Activated CD8-positive, alpha-beta T cell treated with anti-CD3 and anti-CD28 coated beads, Interleukin-2, amount 10 ng/mL, durations not matched to agents 7 days and 5 days (primary cell): ENCODE measurements at regions of chr3 and their contacts with region 1.

Region 1: GRCh38 chr3:94062431-94063404 is at the starts of genes DHFR2 and NSUN3:
- DNase-seq: peak; percentile 91
- ATAC-seq: peak; percentile 92
- H3K4me3 Mint-ChIP-seq: peak within 1 kb of the TSS; percentile 98
- H3K27ac Mint-ChIP-seq: peak within 1 kb of the TSS; percentile 98
- H3K4me1 Mint-ChIP-seq: peaks cover 31% of the 10 kb centered on the region
- H3K27me3 Mint-ChIP-seq: no peaks in the 10 kb centered on the region
- total RNA-seq, gene DHFR2: 6.4 to 8.1 TPM
- total RNA-seq, gene NSUN3: 14.1 TPM

Region 2: GRCh38 chr3:94004301-94004910 is 58.3 kb before region 1 on chr3:
- CTCF ChIA-PET with region 1: interaction called, 31 read pairs
- POLR2A ChIA-PET with region 1: interaction called, 17 read pairs
- DNase-seq: peak; percentile 24
- ATAC-seq: peak; percentile 79
- H3K4me3 Mint-ChIP-seq: peak overlapping the region; percentile 60
- H3K27ac Mint-ChIP-seq: peak overlapping the region; percentile 67
- H3K4me1 Mint-ChIP-seq: peaks cover 1% of the 10 kb centered on the region
- H3K27me3 Mint-ChIP-seq: no peaks in the 10 kb centered on the region

Region 3: DNA sequence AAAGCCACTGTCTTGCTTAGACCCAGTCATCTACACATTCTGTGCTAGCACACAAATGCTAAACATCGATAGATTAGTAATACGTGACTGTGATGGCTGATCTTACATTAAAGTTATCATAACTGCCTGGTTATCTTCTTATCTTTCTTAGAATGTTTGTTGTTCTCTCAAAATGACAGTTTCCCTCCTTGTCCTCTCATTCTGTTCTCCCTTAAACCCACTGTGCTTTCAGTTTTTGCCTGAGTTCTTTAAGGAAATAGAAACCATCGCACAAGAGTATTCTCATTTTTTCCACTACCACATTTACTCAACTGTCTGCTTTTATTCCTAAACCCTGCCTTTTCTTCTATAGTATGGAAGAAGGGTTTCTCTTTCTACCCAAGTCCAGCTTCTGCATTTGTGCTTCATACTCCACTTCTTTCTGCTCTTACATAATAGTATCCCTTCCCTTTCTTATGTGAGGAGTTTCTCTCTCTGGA is 51.4 kb before region 1 on chr3:
- CTCF ChIA-PET with region 1: interaction called, 6 read pairs
- POLR2A ChIA-PET with region 1: interaction called, 17 read pairs
- DNase-seq: no peak
- ATAC-seq: peak; percentile 69
- H3K4me3 Mint-ChIP-seq: peak overlapping the region; percentile 2
- H3K27ac Mint-ChIP-seq: peak overlapping the region; percentile 9
- H3K4me1 Mint-ChIP-seq: peaks cover 19% of the 10 kb centered on the region
- H3K27me3 Mint-ChIP-seq: no peaks in the 10 kb centered on the region

Region 4: DNA sequence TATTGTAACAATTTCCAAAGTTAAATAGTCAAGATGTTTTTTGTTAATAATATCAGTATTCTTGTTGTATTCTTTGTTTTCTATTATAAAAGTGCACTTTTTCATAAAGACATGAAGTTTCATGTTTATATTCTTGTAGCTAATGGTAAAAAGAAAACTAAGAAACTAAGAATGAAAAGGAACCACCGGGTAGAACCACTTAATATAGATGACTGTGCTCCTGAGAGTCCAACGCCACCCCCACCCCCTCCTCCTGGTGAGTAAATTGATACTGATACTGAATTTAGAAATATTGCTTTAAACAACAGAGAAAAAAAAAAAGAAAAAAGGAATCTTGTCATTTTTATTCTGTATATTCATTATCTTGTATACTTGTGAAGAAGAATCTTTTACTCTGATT is 13.5 kb before region 1 on chr3:
- CTCF ChIA-PET with region 1: interaction called, 10 read pairs
- POLR2A ChIA-PET with region 1: interaction called, 5 read pairs
- DNase-seq: no peak
- ATAC-seq: no peak
- H3K4me3 Mint-ChIP-seq: no peak overlapping the region
- H3K27ac Mint-ChIP-seq: no peak overlapping the region
- H3K4me1 Mint-ChIP-seq: no peaks in the 10 kb centered on the region
- H3K27me3 Mint-ChIP-seq: no peaks in the 10 kb centered on the region

Region 5: GRCh38 chr3:94293793-94294195 is 231.1 kb after region 1 on chr3:
- CTCF ChIA-PET with region 1: no interaction called
- POLR2A ChIA-PET with region 1: no interaction called
- DNase-seq: no peak
- ATAC-seq: no peak
- H3K4me3 Mint-ChIP-seq: no peak overlapping the region
- H3K27ac Mint-ChIP-seq: no peak overlapping the region
- H3K4me1 Mint-ChIP-seq: no peaks in the 10 kb centered on the region
- H3K27me3 Mint-ChIP-seq: no peaks in the 10 kb centered on the region